ENCODE measurements at regions of chr2 and their contacts with region 1.

Region 1: DNA sequence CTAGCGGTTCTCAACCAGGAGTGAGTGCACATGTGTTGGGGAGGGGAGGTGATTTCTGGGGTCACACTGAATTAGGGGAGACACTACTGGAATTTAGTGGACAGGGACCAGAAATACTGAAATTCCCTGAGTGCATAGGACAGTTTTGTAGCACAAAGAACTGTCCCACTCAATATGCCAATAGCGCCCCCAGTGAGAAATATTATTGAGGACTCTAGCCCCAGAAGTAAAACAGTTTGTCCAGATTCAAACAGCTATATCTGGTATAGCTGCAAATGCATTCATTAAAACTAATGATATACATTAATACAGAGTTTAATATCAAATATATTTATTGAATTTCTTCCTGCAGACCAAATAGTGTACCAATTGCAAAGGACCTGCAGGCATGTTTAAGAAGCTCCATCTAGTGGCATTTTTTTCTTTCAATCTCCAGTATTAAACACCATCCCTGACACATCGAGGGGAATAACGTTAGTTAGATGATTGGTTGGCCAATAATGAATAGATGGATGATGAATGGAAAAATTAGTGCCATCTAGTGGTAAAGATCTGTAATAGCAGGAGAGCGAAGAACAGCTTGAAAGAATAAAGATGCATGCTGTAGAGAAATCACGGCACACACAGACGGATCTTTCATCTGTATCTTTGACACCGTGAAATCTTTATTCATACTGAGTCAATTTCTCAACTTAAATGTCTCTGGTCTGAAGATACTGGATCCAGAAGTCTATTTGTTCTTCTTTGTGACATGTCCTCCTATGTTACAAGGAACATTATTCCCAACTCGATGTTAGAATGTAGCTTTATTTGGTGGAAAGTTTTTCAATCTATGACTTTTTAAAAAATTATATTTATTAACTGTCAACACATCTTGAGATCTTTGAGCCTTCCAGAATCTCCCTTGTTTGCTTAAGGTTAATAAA is 62.5 kb downstream of the DHRS9 start:
- DNase-seq: no peak
- H3K4me3 ChIP-seq: no peak overlapping the region
- H3K27ac ChIP-seq: no peak overlapping the region
- H3K4me1 ChIP-seq: no peaks in the 10 kb centered on the region
- H3K27me3 ChIP-seq: no peaks in the 10 kb centered on the region
- CTCF ChIP-seq: peak in 3 of 4 experiments; percentile 51 to 82 (median 69)
- EP300 ChIP-seq: no peak
- POLR2A ChIP-seq: no peak

Region 2: GRCh38 chr2:168961450-168962229 is 170.2 kb before region 1 on chr2:
- intact Hi-C with region 1: loop called (anchors 5 kb)
- DNase-seq: no peak
- H3K4me3 ChIP-seq: no peak overlapping the region
- H3K27ac ChIP-seq: no peak overlapping the region
- H3K4me1 ChIP-seq: no peaks in the 10 kb centered on the region
- H3K27me3 ChIP-seq: no peaks in the 10 kb centered on the region
- CTCF ChIP-seq: peak; percentile 53 to 69 (median 66)
- EP300 ChIP-seq: no peak
- POLR2A ChIP-seq: no peak